GM12878 (cell line): ENCODE measurements at regions of chr16 and their contacts with region 1.

Region 1: DNA sequence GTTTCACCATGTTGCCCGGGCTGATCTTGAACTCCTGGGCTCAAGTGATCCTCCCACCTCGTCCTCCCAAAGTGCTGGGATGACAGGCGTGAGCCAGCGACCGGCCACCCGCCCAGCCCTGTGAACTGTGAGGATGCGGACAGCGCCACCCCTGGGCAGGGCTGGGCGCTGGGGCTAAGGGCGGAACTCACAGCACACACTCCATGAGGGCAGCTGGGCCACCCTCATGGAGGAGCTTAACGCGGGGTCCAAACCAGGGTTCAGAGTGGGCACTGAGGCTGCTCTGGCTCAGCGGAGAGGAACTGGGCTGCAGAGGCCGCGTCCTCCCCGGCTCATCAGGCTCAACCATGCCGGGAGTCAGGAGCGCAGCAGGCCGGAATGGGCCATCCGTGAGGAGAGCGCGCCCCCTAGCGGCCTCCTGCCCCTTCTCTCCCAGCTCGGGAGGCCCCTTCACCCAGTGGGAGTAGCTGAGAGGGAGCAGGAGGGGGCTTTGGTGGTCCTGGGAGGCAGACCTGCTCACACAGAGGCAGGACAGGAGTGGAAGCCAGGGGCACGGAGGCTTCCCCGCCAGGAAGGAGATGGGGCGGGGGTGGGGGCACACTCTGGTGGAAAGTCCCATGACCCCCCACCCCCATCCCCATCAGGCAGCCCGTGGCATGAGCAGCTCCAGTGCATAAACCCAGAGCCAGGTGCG is 13.8 kb downstream of the CORO7 start:
- DNase-seq: no peak
- ATAC-seq: peak; percentile 89
- H3K4me3 ChIP-seq: no peak overlapping the region
- H3K27ac ChIP-seq: no peak overlapping the region
- H3K4me1 ChIP-seq: no peaks in the 10 kb centered on the region
- H3K27me3 ChIP-seq: no peaks in the 10 kb centered on the region
- CTCF ChIP-seq: peak; percentile 83 to 96 (median 88)
- EP300 ChIP-seq: no peak
- POLR2A ChIP-seq: no peak
- RAD21 ChIP-seq: peak; percentile 85

Region 2: GRCh38 chr16:4288148-4288921 is 114.3 kb before region 1 on chr16:
- CTCF ChIA-PET with region 1: interaction called, 27 read pairs
- POLR2A ChIA-PET with region 1: no interaction called
- RAD21 ChIA-PET with region 1: interaction called, 11 read pairs
- SMC1A ChIA-PET with region 1: interaction called, 4 read pairs
- in situ Hi-C with region 1: loop called (anchors 5 kb)
- intact Hi-C with region 1: loop called (anchors 2 kb)
- DNase-seq: no peak
- ATAC-seq: peak; percentile 100
- H3K4me3 ChIP-seq: no peak overlapping the region
- H3K27ac ChIP-seq: no peak overlapping the region
- H3K4me1 ChIP-seq: peaks cover 3% of the 10 kb centered on the region; the same call in 1 of the 2 replicates
- H3K27me3 ChIP-seq: no peaks in the 10 kb centered on the region; a peak in 1 of 4 replicates
- CTCF ChIP-seq: peak; percentile 97 to 100 (median 99); a peak in 5 of 6 replicates
- EP300 ChIP-seq: no peak
- POLR2A ChIP-seq: no peak
- RAD21 ChIP-seq: peak; percentile 92

Region 3: DNA sequence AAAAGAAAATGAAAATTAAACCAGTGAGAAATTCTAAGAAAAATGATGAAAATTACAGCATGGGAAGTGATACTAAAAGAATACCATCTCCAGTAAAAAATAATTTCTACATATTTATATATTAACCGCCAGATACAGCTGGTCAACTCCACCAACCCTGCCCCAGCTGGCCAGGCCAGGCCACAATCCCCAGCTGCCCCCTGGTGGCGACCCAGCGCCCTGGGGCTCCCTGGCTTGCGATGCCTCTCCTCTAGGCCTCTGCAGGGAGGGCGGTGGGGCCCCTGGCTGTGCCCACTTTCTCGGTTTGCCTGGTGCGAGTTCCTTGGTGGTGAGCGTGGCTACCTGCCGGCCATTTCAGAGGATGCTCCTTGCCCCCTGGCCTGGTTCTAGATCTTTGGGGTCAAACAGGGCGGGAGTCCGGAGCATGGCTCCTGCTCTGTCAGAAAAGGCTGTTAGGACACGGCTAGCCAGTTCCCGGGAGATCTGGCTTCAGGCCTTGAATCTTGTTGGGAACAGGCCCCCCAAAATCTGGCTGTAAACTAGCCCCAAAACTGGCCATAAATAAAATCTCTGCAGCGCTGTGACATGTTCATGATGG is 72.2 kb before region 1 on chr16:
- CTCF ChIA-PET with region 1: interaction called, 17 read pairs
- POLR2A ChIA-PET with region 1: no interaction called
- RAD21 ChIA-PET with region 1: interaction called, 3 read pairs
- SMC1A ChIA-PET with region 1: no interaction called
- in situ Hi-C with region 1: no loop called
- intact Hi-C with region 1: no loop called
- DNase-seq: no peak
- ATAC-seq: peak; percentile 85
- H3K4me3 ChIP-seq: no peak overlapping the region
- H3K27ac ChIP-seq: no peak overlapping the region
- H3K4me1 ChIP-seq: peaks cover 2% of the 10 kb centered on the region
- H3K27me3 ChIP-seq: no peaks in the 10 kb centered on the region
- CTCF ChIP-seq: peak; percentile 94 to 97 (median 95)
- EP300 ChIP-seq: no peak
- POLR2A ChIP-seq: no peak
- RAD21 ChIP-seq: peak; percentile 96

Region 4: GRCh38 chr16:4350787-4351659 is 51.6 kb before region 1 on chr16 and contains the start of gene PAM16:
- CTCF ChIA-PET with region 1: interaction called, 30 read pairs
- POLR2A ChIA-PET with region 1: no interaction called
- RAD21 ChIA-PET with region 1: interaction called, 3 read pairs
- SMC1A ChIA-PET with region 1: interaction called, 3 read pairs
- in situ Hi-C with region 1: no loop called
- intact Hi-C with region 1: no loop called
- DNase-seq: peak; percentile 88
- ATAC-seq: peak; percentile 97
- H3K4me3 ChIP-seq: peak within 1 kb of the TSS; percentile 78
- H3K27ac ChIP-seq: peak within 1 kb of the TSS; percentile 82
- H3K4me1 ChIP-seq: no peaks in the 10 kb centered on the region
- H3K27me3 ChIP-seq: no peaks in the 10 kb centered on the region
- CTCF ChIP-seq: no peak
- EP300 ChIP-seq: no peak
- POLR2A ChIP-seq: peak; percentile 88
- RAD21 ChIP-seq: no peak
- polyA plus RNA-seq, gene PAM16: 20.8 to 48.1 TPM

Region 5: DNA sequence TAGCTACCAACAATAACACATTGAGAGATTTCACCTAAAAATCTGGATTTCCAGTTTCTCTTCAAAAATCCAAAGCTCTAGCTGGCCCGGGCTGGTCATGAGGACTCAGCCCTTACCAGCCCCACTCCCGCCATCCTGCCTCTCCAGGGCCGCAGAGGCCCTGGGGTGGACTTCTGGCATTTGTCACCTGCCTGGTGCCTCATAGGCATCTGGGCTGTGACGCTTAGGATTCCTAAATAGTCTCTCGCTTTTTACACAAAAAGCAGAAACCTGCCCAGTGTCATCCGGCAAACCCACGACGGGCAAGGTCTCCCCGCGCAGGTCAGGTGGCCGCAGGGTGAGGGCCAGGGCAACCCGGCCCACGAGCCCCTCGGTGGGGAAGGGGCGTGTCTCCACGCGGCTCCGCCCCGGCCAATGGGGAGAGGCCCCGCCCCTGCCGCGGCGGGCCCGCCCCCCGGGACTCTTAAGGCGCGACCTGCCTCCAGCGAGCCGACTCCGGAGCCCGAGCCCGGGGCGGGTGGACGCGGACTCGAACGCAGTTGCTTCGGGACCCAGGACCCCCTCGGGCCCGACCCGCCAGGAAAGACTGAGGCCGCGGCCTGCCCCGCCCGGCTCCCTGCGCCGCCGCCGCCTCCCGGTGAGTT is 31.1 kb before region 1 on chr16 and contains the start of gene VASN:
- CTCF ChIA-PET with region 1: interaction called, 11 read pairs
- POLR2A ChIA-PET with region 1: no interaction called
- RAD21 ChIA-PET with region 1: interaction called, 3 read pairs
- SMC1A ChIA-PET with region 1: no interaction called
- in situ Hi-C with region 1: no loop called
- intact Hi-C with region 1: no loop called
- DNase-seq: no peak
- ATAC-seq: peak; percentile 85
- H3K4me3 ChIP-seq: peak within 1 kb of the TSS; percentile 22; the same call in 1 of the 2 replicates
- H3K27ac ChIP-seq: no peak within 1 kb of the TSS
- H3K4me1 ChIP-seq: no peaks in the 10 kb centered on the region
- H3K27me3 ChIP-seq: no peaks in the 10 kb centered on the region
- CTCF ChIP-seq: no peak
- EP300 ChIP-seq: no peak
- POLR2A ChIP-seq: peak; percentile 78
- RAD21 ChIP-seq: no peak
- polyA plus RNA-seq, gene VASN: 0.02 TPM in 1 of 2 experiments, not detected in the other

Region 6: GRCh38 chr16:4416200-4417032 is 13.8 kb after region 1 on chr16 and contains the start of gene CORO7:
- CTCF ChIA-PET with region 1: interaction called, 22 read pairs
- POLR2A ChIA-PET with region 1: no interaction called
- RAD21 ChIA-PET with region 1: interaction called, 11 read pairs
- SMC1A ChIA-PET with region 1: interaction called, 8 read pairs
- in situ Hi-C with region 1: no loop called
- intact Hi-C with region 1: no loop called
- DNase-seq: peak; percentile 76
- ATAC-seq: peak; percentile 86
- H3K4me3 ChIP-seq: peak within 1 kb of the TSS; percentile 92
- H3K27ac ChIP-seq: peak within 1 kb of the TSS; percentile 83
- H3K4me1 ChIP-seq: peaks cover 20% of the 10 kb centered on the region
- H3K27me3 ChIP-seq: no peaks in the 10 kb centered on the region
- CTCF ChIP-seq: no peak
- EP300 ChIP-seq: 0 out of 4 replicates have a peak, but pooled peaks of 1 of the 2 experiments have one; percentile 7
- POLR2A ChIP-seq: peak; percentile 94
- RAD21 ChIP-seq: no peak
- polyA plus RNA-seq, gene CORO7: 0.64 to 0.84 TPM

Region 7: GRCh38 chr16:4475880-4476788 is 73.5 kb after region 1 on chr16 and contains the start of gene HMOX2:
- CTCF ChIA-PET with region 1: no interaction called
- POLR2A ChIA-PET with region 1: no interaction called
- RAD21 ChIA-PET with region 1: no interaction called
- SMC1A ChIA-PET with region 1: no interaction called
- in situ Hi-C with region 1: no loop called
- intact Hi-C with region 1: no loop called
- DNase-seq: peak; percentile 90
- ATAC-seq: peak; percentile 90
- H3K4me3 ChIP-seq: peak within 1 kb of the TSS; percentile 98
- H3K27ac ChIP-seq: peak within 1 kb of the TSS; percentile 77
- H3K4me1 ChIP-seq: peaks cover 4% of the 10 kb centered on the region; the same call in 1 of the 2 replicates
- H3K27me3 ChIP-seq: no peaks in the 10 kb centered on the region
- CTCF ChIP-seq: peak; percentile 52 to 63 (median 54); a peak in 5 of 6 replicates
- EP300 ChIP-seq: 0 out of 4 replicates have a peak, but pooled peaks of 1 of the 2 experiments have one; percentile 8
- POLR2A ChIP-seq: peak; percentile 99
- RAD21 ChIP-seq: no peak
- polyA plus RNA-seq, gene HMOX2: 26.4 to 37.7 TPM